ENCODE measurements at regions of chr6 and their contacts with region 1.

Region 1: GRCh38 chr6:110053395-110054240 is 75.5 kb downstream of the GPR6 start:
- DNase-seq: peak; percentile 36 to 51
- ATAC-seq: peak; percentile 75 to 83; a peak in 5 of 6 replicates
- H3K4me3 ChIP-seq: no peak overlapping the region
- H3K27ac ChIP-seq: no peak overlapping the region
- H3K4me1 ChIP-seq: no peaks in the 10 kb centered on the region
- CTCF ChIP-seq: peak; percentile 68
- EP300 ChIP-seq: no peak
- POLR2A ChIP-seq: no peak
- RAD21 ChIP-seq: peak; percentile 67 to 68

Region 2: GRCh38 chr6:109816452-109817374 is 236.9 kb before region 1 on chr6:
- CTCF ChIA-PET with region 1: no interaction called
- POLR2A ChIA-PET with region 1: no interaction called
- DNase-seq: no peak
- ATAC-seq: no peak
- H3K4me3 ChIP-seq: no peak overlapping the region
- H3K27ac ChIP-seq: no peak overlapping the region
- H3K4me1 ChIP-seq: no peaks in the 10 kb centered on the region
- CTCF ChIP-seq: no peak
- EP300 ChIP-seq: no peak
- POLR2A ChIP-seq: no peak
- RAD21 ChIP-seq: no peak

Region 3: GRCh38 chr6:109877028-109878006 is 176.3 kb before region 1 on chr6:
- CTCF ChIA-PET with region 1: no interaction called
- POLR2A ChIA-PET with region 1: no interaction called
- DNase-seq: no peak
- ATAC-seq: no peak
- H3K4me3 ChIP-seq: no peak overlapping the region
- H3K27ac ChIP-seq: no peak overlapping the region
- H3K4me1 ChIP-seq: no peaks in the 10 kb centered on the region
- CTCF ChIP-seq: no peak
- EP300 ChIP-seq: no peak
- POLR2A ChIP-seq: no peak
- RAD21 ChIP-seq: no peak

Region 4: DNA sequence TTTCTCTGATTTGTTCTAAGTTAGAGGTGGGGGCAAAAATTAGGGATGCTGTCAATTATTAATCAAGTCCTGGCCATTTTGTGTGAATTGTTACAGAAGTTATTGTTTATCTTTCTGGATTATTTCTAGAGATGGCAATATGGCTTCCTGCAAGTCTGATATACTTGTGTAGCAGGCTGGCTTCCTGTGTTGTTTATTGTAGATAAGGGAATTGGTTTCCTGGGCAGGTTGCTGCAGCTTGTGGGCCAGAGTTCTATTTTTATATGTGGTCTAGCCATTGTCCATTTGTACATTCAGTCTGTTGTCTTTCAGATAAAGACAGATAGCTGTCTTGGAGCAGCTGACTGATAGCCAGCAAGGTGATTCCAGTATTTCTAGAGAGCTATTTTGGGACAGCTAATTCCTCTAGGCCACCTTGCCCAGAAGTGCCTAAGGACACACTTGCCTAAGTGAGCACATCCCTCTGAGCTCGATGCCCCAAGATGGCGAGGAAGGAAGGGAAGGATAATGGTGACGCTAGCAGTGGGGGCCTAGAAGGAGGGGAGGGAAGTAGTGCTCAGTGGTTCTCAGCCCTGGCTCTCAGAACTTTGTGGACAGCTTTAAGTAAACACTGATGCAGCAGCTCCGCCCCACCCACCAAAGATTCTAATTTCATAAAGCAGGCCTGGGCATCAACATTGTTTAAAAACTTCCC is 336.2 kb after region 1 on chr6:
- CTCF ChIA-PET with region 1: interaction called, 22 read pairs
- POLR2A ChIA-PET with region 1: no interaction called
- DNase-seq: no peak
- ATAC-seq: no peak
- H3K4me3 ChIP-seq: no peak overlapping the region
- H3K27ac ChIP-seq: no peak overlapping the region
- H3K4me1 ChIP-seq: no peaks in the 10 kb centered on the region
- CTCF ChIP-seq: no peak
- EP300 ChIP-seq: no peak
- POLR2A ChIP-seq: no peak
- RAD21 ChIP-seq: no peak

Measured in A549 (cell line).